Activated B cell treated with CpG ODN at 0.5 μM for 24 hours (primary cell): ENCODE measurements at regions of chr9 and their contacts with region 1.

Region 1: DNA sequence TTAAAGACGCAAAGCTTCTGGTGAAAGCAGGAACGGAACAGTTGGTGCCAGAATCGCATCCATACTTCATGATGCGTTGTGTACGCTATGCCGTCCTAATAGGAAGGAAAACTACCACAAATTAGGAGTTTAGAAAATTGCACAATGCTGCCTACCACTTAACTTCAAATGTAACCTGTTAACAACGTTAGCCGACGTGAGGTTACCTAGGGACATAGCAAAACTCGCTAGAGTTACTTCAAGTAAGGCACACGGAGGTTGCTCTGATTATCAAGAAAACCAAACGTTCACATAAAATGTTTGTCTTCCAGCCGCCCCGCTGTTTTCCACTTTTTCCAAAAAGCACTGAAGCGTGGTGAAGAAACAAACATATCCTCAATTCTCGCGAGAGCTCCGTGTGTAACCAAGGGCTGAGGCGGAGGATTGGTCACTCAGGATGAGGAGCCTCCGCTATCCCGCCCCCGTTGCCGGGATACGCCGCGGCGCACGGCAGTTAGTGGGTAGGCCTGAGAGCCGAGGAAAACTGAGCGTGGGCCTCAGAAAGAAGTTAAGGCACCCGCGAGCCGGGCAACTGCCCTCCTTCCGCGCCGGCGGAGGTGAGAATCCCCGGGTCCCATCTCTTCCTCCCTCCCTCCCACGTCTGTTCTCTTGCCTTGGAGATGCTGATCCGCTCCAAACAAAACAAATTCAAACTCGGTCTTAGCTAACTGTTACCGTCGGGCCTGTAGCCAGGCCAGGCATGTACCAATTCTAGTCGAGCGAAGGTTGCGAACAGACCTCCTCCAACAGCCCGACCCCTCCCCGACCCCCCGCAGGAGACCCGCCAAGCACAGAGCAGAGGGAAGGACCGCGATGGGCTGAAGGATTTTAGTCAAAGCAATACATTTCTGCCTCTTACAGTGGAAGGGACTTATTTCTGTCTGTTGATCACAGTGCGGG is at the start of gene IFT74:
- DNase-seq: peak; percentile 88
- ATAC-seq: peak; percentile 100
- H3K4me3 Mint-ChIP-seq: peak within 1 kb of the TSS; percentile 88
- H3K27ac Mint-ChIP-seq: peak within 1 kb of the TSS; percentile 90
- H3K4me1 Mint-ChIP-seq: peaks cover 28% of the 10 kb centered on the region
- H3K27me3 Mint-ChIP-seq: peaks cover under 1% of the 10 kb centered on the region
- CTCF ChIP-seq: no peak
- total RNA-seq, gene IFT74: 14.3 and 14.9 TPM in 2 replicates

Region 2: DNA sequence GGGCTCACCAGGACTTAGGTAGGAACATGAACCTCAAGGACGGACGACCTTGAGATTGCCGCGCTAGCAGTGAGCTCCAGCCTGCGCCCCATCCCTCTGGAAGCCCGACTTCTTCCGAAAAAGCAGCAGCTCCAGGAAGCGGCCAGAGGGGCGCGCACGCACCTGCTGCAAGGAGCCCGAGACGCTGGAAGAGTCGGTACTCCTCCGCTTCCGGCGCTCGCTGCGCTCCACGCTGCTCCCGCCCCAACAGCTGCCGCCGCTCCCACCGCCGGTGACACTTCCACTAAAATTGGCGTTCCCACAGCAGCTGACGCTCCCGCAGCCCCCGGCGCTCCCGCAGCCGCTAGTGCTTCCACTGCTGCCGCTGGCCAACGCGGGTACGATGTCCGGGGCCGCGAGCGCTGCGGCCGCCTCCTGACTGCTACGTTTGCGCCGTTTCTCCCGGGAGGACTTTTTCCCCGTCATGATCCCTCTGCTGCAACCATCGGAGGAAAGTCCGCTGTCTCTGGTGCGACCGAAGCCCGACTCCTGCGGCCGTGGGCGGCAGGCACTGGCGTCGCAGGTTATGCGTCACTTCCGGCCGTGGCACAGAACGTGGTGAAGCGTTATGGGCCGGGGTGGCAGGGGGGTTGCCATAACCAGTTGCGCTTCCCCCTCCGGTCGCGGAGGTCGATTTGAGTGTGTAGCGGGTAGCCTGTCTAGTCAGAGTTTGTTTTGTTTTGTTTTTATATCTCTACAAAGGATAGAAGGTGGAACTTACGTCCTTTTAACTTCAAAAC is 63.8 kb before region 1 on chr9 and contains the start of gene CAAP1:
- CTCF ChIA-PET with region 1: interaction called, 3 read pairs
- POLR2A ChIA-PET with region 1: interaction called, 23 read pairs
- intact Hi-C with region 1: loop called (anchors 2 kb)
- DNase-seq: peak; percentile 87
- ATAC-seq: peak; percentile 96
- H3K4me3 Mint-ChIP-seq: peak within 1 kb of the TSS; percentile 100
- H3K27ac Mint-ChIP-seq: peak within 1 kb of the TSS; percentile 98
- H3K4me1 Mint-ChIP-seq: peaks cover 44% of the 10 kb centered on the region
- H3K27me3 Mint-ChIP-seq: no peaks in the 10 kb centered on the region
- CTCF ChIP-seq: no peak
- total RNA-seq, gene CAAP1: 15.1 and 16.6 TPM in 2 replicates